Activated CD4-positive, alpha-beta T cell treated with anti-CD3 and anti-CD28 coated beads for 36 hours (primary cell): ENCODE measurements at regions of chr17 and their contacts with region 1.

Region 1: DNA sequence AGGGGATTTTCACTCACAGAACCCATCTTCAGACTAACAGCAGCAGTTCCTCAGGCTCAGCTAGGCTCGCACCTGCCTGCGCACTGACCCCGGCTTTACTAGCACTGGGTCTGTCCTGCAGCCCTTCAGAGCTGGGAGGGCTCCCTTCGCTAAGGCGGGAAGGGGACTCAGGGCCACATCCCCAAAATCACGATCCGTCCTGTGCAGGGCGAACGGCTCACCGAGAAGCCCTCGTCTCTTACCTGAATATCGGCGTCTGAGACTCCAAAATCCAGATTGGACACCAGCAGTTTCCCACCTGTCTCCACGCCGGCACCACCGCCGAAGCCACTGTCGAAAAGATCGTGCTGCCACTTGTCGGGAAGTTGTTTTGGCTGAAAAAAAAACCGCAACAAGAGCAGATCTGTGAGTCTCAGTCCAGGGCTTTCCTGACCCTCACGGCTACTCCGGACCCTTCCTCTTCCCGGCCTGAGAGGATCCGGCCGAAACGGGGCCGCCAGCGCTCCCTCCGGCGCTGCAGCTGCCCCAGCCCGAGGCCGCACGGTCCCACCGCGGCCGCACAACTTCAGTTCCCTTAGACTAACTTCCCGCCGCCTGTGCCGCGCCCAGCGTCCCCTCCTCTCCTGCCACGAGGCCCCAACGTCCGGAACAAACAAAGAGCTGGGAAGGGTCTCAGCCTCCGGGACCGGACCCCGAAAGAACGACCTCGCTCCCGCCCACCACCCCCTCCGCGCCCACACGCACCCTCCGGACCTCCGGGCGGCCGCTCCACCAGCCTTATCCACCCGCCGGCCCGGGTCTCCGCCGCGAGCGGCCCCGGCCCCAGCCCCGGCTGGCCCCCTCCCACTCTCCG is 713 bp downstream of the ALYREF start:
- DNase-seq: peak; percentile 51
- ATAC-seq: no peak
- H3K4me3 Mint-ChIP-seq: peak overlapping the region; percentile 85
- H3K27ac Mint-ChIP-seq: peak overlapping the region; percentile 93
- H3K4me1 Mint-ChIP-seq: peaks cover 32% of the 10 kb centered on the region
- H3K27me3 Mint-ChIP-seq: no peaks in the 10 kb centered on the region

Region 2: GRCh38 chr17:81666342-81667191 is 224.1 kb before region 1 on chr17 and contains the starts of genes CCDC137 and OXLD1:
- CTCF ChIA-PET with region 1: no interaction called
- POLR2A ChIA-PET with region 1: no interaction called
- intact Hi-C with region 1: loop called in 1 of 2 experiments (anchors 1 kb)
- DNase-seq: peak; percentile 97
- ATAC-seq: peak; percentile 91
- H3K4me3 Mint-ChIP-seq: peak within 1 kb of the TSS; percentile 91
- H3K27ac Mint-ChIP-seq: peak within 1 kb of the TSS; percentile 97
- H3K4me1 Mint-ChIP-seq: peaks cover 53% of the 10 kb centered on the region
- H3K27me3 Mint-ChIP-seq: no peaks in the 10 kb centered on the region
- total RNA-seq, gene CCDC137: 30.0 to 36.6 TPM
- total RNA-seq, gene OXLD1: 29.4 to 45.3 TPM

Region 3: GRCh38 chr17:81711814-81712467 is 178.7 kb before region 1 on chr17 and contains the start of gene SLC25A10:
- CTCF ChIA-PET with region 1: no interaction called
- POLR2A ChIA-PET with region 1: no interaction called
- intact Hi-C with region 1: loop called in 1 of 2 experiments (anchors 1 kb)
- DNase-seq: peak; percentile 93
- ATAC-seq: peak; percentile 87
- H3K4me3 Mint-ChIP-seq: peak within 1 kb of the TSS; percentile 89
- H3K27ac Mint-ChIP-seq: peak within 1 kb of the TSS; percentile 84
- H3K4me1 Mint-ChIP-seq: peaks cover 24% of the 10 kb centered on the region
- H3K27me3 Mint-ChIP-seq: no peaks in the 10 kb centered on the region
- total RNA-seq, gene SLC25A10: 28.6 to 31.8 TPM

Region 4: GRCh38 chr17:81911277-81911961 is 20.7 kb after region 1 on chr17 and contains the start of gene PCYT2:
- CTCF ChIA-PET with region 1: interaction called, 4 read pairs
- POLR2A ChIA-PET with region 1: interaction called, 4 read pairs
- intact Hi-C with region 1: loop called in 1 of 2 experiments (anchors 1 kb)
- DNase-seq: peak; percentile 97
- ATAC-seq: peak; percentile 96
- H3K4me3 Mint-ChIP-seq: peak within 1 kb of the TSS; percentile 79
- H3K27ac Mint-ChIP-seq: no peak within 1 kb of the TSS
- H3K4me1 Mint-ChIP-seq: peaks cover 14% of the 10 kb centered on the region
- H3K27me3 Mint-ChIP-seq: no peaks in the 10 kb centered on the region
- total RNA-seq, gene PCYT2: 19.7 to 24.0 TPM

Region 5: DNA sequence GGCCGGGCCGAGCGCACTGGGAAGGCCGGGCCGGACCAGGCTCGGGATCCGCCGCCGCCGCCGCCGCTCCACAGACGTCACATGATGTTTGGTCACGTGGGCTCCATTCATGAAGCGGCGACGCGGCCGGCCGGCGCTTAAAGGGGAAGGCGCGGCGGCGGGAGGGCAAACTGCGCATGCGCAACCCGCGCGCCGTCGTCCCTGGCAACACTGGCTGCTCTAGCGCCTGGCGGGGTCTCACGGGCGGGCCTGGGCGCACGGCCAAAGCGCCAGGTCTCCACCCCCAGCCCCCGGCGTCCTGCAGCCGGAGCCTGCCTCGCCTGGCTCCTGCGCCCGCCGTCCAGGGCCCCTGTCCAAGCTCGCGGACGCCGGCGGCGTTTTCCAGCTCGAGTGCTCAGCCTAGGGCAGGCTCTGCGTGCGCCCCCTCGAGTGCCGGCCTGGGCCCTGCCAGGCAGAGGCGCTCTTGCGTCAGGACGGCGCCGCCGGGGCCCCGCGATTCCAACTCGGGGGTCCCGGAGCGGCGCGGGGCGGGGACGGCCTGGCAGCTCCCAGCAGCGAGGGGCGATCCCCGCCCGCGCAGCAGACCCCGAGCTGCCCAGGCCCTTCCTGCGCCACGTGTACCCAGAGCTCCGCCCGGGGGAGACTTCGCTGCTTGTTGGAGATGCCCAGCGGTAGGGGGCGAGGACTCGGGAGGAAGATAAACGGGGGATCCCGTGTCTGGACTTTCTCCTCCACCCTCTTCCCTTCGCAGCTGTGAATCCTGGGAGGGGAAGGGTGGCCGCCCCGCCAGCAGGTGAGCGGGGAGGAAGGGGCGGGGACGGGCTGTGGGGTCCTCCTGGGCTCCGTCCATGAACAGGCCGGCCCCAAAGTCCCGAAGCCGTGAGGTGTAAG is 37.2 kb after region 1 on chr17 and contains the start of gene MAFG:
- CTCF ChIA-PET with region 1: no interaction called
- POLR2A ChIA-PET with region 1: no interaction called
- intact Hi-C with region 1: loop called in 1 of 2 experiments (anchors 5 kb)
- DNase-seq: peak; percentile 94
- ATAC-seq: peak; percentile 62
- H3K4me3 Mint-ChIP-seq: peak within 1 kb of the TSS; percentile 85
- H3K27ac Mint-ChIP-seq: peak within 1 kb of the TSS; percentile 85
- H3K4me1 Mint-ChIP-seq: peaks cover 32% of the 10 kb centered on the region
- H3K27me3 Mint-ChIP-seq: peaks cover 2% of the 10 kb centered on the region
- total RNA-seq, gene MAFG: 15.3 to 18.3 TPM

Region 6: GRCh38 chr17:82030470-82031302 is 140.0 kb after region 1 on chr17:
- CTCF ChIA-PET with region 1: no interaction called
- POLR2A ChIA-PET with region 1: no interaction called
- intact Hi-C with region 1: loop called in 1 of 2 experiments (anchors 1 kb)
- DNase-seq: peak; percentile 92
- ATAC-seq: peak; percentile 79
- H3K4me3 Mint-ChIP-seq: peak overlapping the region; percentile 67
- H3K27ac Mint-ChIP-seq: no peak overlapping the region
- H3K4me1 Mint-ChIP-seq: peaks cover 13% of the 10 kb centered on the region
- H3K27me3 Mint-ChIP-seq: no peaks in the 10 kb centered on the region